Mammary epithelial cell (primary cell): ENCODE measurements at regions of chr19 and their contacts with region 1.

Region 1: DNA sequence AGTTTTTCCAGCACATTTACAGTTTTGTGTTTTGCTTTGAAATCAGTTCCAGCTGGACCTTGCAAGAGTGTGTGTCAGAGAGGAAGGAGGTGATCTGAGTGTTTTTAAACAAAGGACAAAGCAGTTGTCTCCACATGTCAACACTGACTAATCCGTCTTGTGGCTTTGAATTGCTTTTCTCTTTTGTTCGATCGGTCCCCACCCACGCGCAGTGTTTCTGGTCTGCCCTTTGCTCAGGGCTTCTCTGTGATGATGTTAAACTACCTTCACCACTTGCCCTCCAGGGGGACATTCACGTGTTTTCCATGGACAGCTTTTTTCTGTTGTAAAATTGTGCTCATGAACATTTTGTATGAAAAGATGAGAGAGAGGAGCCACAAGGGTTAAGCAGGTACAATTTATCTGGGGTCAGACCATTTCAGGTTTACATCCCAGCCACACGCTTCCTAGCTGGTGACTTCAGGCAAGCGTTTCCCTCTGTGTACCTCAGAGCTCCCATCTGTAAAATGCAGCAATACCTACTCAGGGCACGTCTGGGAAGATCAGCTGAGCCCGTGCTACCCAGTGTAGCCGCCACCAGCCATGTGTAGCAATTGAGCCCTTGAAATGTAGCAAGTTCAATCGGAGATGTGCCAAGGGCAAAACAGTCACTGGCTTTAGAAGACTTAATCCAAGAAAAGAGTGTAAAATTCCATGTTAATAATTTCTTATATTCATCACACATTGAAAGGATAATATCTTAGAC is 13.5 kb upstream of the PLA2G4C start:
- DNase-seq: peak; percentile 96
- H3K4me3 ChIP-seq: no peak overlapping the region
- H3K27ac ChIP-seq: peak overlapping the region; percentile 69
- H3K4me1 ChIP-seq: peaks cover 30% of the 10 kb centered on the region
- H3K27me3 ChIP-seq: no peaks in the 10 kb centered on the region
- CTCF ChIP-seq: peak; percentile 31 to 45

Region 2: GRCh38 chr19:48110350-48110966 is 13.6 kb before region 1 on chr19 and contains the start of gene PLA2G4C:
- CTCF ChIA-PET with region 1: no interaction called
- dilution Hi-C with region 1: no loop called
- in situ Hi-C with region 1: no loop called
- intact Hi-C with region 1: loop called (anchors 1 kb)
- DNase-seq: peak; percentile 85
- H3K4me3 ChIP-seq: peak within 1 kb of the TSS; percentile 42 to 44 (median 44)
- H3K27ac ChIP-seq: peak within 1 kb of the TSS; percentile 63
- H3K4me1 ChIP-seq: peaks cover 11% of the 10 kb centered on the region
- H3K27me3 ChIP-seq: no peaks in the 10 kb centered on the region
- CTCF ChIP-seq: no peak
- total RNA-seq, gene PLA2G4C: 2.7 to 3.2 TPM

Region 3: GRCh38 chr19:48135411-48135810 is 11.3 kb after region 1 on chr19:
- CTCF ChIA-PET with region 1: no interaction called
- dilution Hi-C with region 1: no loop called
- in situ Hi-C with region 1: no loop called
- intact Hi-C with region 1: no loop called
- DNase-seq: no peak
- H3K4me3 ChIP-seq: no peak overlapping the region
- H3K27ac ChIP-seq: no peak overlapping the region
- H3K4me1 ChIP-seq: no peaks in the 10 kb centered on the region
- H3K27me3 ChIP-seq: no peaks in the 10 kb centered on the region
- CTCF ChIP-seq: no peak